ENCODE measurements at regions of chr4 and their contacts with region 1.

Region 1: GRCh38 chr4:105146276-105147015 is at the start of gene TET2:
- DNase-seq: peak in 1 of 2 donors; percentile 60
- H3K4me3 ChIP-seq: peak within 1 kb of the TSS; percentile 58 to 81 (median 69)
- H3K27ac ChIP-seq: peak within 1 kb of the TSS; percentile 81 to 89
- H3K4me1 ChIP-seq: peaks cover 0 to 7% of the 10 kb centered on the region in 2 donors
- H3K27me3 ChIP-seq: no peaks in the 10 kb centered on the region
- CTCF ChIP-seq: peak in 2 of 3 donors; percentile 10 to 20
- POLR2A ChIP-seq: peak; percentile 22
- total RNA-seq, gene TET2: 23.2 to 37.3 (median 29.8) TPM

Region 2: GRCh38 chr4:104393655-104394324 is 752.7 kb before region 1 on chr4:
- intact Hi-C with region 1: no loop called
- DNase-seq: no peak
- H3K4me3 ChIP-seq: no peak overlapping the region
- H3K27ac ChIP-seq: no peak overlapping the region
- H3K4me1 ChIP-seq: no peaks in the 10 kb centered on the region
- H3K27me3 ChIP-seq: no peaks in the 10 kb centered on the region
- CTCF ChIP-seq: no peak
- POLR2A ChIP-seq: no peak

Region 3: DNA sequence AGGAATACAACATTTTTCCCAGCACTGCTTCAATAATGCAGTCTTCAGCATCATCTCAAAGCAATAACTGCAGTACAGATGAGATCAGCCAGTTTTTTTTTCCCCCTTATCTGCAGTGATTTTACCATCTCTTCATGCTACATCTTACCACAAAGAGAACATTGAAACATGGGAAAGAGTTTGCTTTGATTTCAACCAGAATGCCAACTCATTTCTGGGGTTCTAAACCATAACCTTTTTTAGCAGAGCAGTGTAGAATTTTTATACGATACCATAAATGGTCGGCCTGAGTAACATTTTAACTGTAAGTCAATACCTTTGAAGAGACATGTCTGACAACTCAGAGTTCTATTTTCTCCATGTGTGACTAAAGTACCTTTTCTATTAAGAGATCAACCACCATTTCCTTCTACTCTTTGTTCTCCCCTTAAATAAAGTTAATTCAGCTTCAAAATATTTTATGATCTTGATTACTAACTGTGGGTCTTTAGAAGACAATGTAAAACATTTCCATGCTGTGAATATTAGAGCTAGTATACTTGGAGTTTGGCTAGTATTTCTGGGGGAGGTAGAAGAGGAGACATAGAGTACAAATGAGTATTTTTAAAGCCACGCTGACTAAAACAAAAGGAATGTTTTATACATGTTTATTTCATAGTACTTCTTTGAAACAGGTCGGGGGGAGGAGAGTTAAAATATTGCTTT is 69.3 kb after region 1 on chr4:
- intact Hi-C with region 1: no loop called
- DNase-seq: no peak
- H3K4me3 ChIP-seq: no peak overlapping the region
- H3K27ac ChIP-seq: no peak overlapping the region
- H3K4me1 ChIP-seq: no peaks in the 10 kb centered on the region
- H3K27me3 ChIP-seq: no peaks in the 10 kb centered on the region
- CTCF ChIP-seq: no peak
- POLR2A ChIP-seq: no peak

Region 4: DNA sequence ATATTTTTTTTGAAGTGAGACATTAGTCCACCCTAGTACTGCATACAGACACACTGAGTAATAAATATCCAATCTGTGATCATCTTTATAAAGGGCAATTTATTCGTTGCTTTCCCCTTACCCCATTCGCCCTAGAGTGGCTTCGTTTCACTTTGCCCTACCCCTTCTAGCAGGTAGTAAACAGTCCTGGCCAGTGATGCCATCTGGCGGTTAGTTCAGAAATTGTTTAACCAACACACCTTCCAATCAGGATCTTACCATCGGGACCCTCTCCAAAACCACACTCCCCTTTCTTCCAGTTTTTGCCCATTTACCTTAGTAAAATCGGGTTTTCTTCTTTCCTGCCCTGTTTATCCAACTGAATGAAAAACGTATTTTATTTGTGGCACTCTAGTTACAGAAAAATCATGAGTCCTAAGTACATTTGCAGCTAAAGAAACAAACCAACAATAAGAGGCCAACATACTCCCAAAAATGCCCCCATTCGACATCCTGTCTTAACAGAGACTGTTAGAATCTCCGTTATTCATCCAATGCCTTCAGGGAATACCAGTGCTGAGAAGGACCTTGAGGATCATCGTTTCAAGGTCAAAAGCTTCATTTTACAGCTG is 325.2 kb after region 1 on chr4:
- intact Hi-C with region 1: loop called (anchors 10 kb)
- DNase-seq: peak; percentile 55 to 60
- H3K4me3 ChIP-seq: peak overlapping the region in 2 of 3 donors; percentile 84 to 86
- H3K27ac ChIP-seq: peak overlapping the region; percentile 99 to 100
- H3K4me1 ChIP-seq: peaks cover 0 to 5% of the 10 kb centered on the region in 2 donors
- H3K27me3 ChIP-seq: no peaks in the 10 kb centered on the region
- CTCF ChIP-seq: peak; percentile 67 to 71 (median 68)
- POLR2A ChIP-seq: no peak